ENCODE measurements at regions of chr4 and their contacts with region 1.

Region 1: GRCh38 chr4:145545538-145546174 is 64.0 kb downstream of the SMAD1 start:
- DNase-seq: peak; percentile 95
- H3K4me3 Mint-ChIP-seq: peak overlapping the region; percentile 70
- H3K27ac Mint-ChIP-seq: peak overlapping the region; percentile 87
- H3K4me1 Mint-ChIP-seq: peaks cover 31% of the 10 kb centered on the region
- H3K27me3 Mint-ChIP-seq: no peaks in the 10 kb centered on the region
- CTCF ChIP-seq: no peak

Region 2: GRCh38 chr4:145180298-145181090 is 365.2 kb before region 1 on chr4 and contains the start of gene OTUD4:
- CTCF ChIA-PET with region 1: interaction called, 3 read pairs
- POLR2A ChIA-PET with region 1: interaction called, 10 read pairs
- intact Hi-C with region 1: no loop called
- DNase-seq: peak; percentile 92
- H3K4me3 Mint-ChIP-seq: peak within 1 kb of the TSS; percentile 73
- H3K27ac Mint-ChIP-seq: peak within 1 kb of the TSS; percentile 85
- H3K4me1 Mint-ChIP-seq: peaks cover 9% of the 10 kb centered on the region
- H3K27me3 Mint-ChIP-seq: no peaks in the 10 kb centered on the region
- CTCF ChIP-seq: no peak
- total RNA-seq, gene OTUD4: 66.2 and 68.0 TPM in 2 replicates

Region 3: DNA sequence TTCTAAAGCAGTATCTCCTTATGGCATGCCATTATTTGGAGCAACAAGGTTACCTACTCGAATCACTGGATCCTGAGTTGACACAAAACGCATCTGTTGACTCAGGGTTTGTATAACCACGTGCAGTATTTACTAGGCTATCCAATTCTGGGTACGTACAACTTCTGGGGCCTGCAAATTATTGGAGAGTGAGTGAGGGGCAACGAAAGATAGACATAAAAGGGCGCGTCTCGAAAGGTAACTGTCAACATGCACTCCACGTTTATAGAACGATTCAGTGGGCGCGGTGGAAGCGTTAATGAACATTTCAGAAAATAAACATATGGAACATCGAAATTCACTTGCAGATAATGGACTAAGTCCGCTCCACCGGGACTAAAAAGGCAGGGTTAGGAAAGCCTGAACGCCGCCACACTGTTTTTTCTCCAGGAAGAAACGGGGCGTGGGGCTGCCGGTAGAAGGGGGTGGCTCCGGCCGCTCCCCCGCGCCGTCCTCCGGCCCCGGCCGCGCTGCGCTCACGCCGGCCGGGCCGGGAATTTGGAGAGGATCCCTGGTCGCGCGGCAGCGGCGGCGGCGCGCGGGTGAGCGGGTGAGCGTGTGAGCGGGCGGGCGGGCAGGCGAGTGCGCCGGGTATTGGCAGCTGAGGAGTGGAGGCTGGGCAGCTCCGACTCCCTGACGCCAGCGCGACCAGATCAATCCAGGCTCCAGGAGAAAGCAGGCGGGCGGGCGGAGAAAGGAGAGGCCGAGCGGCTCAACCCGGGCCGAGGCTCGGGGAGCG is 64.3 kb before region 1 on chr4 and contains the start of gene SMAD1:
- CTCF ChIA-PET with region 1: interaction called, 4 read pairs
- POLR2A ChIA-PET with region 1: interaction called, 49 read pairs
- intact Hi-C with region 1: no loop called
- DNase-seq: peak; percentile 83
- H3K4me3 Mint-ChIP-seq: no peak within 1 kb of the TSS
- H3K27ac Mint-ChIP-seq: no peak within 1 kb of the TSS
- H3K4me1 Mint-ChIP-seq: peaks cover 12% of the 10 kb centered on the region
- H3K27me3 Mint-ChIP-seq: no peaks in the 10 kb centered on the region
- CTCF ChIP-seq: no peak
- total RNA-seq, gene SMAD1: 23.7 and 27.9 TPM in 2 replicates

Region 4: DNA sequence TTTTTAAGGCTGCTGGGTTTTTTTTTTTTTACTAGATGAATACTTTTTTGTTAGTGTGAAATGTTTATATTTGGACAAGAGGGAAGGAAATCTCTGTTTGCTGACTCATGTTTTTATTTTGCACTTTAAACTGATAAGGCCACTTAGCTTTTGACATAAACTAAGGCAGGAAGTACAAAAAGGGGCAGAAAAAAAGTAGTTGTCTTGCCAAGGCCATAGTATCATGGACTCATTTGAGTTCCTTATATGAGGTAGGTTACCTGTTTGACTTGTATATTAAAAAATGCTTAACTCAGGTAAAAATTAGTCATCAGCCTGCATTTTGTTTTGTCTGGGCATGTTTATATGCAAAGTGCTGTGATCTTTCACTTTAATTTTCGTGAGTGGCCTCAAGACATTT is 38.0 kb before region 1 on chr4:
- CTCF ChIA-PET with region 1: interaction called, 3 read pairs
- POLR2A ChIA-PET with region 1: interaction called, 10 read pairs
- intact Hi-C with region 1: no loop called
- DNase-seq: peak; percentile 54
- H3K4me3 Mint-ChIP-seq: peak overlapping the region; percentile 50
- H3K27ac Mint-ChIP-seq: peak overlapping the region; percentile 97
- H3K4me1 Mint-ChIP-seq: peaks cover 11% of the 10 kb centered on the region
- H3K27me3 Mint-ChIP-seq: no peaks in the 10 kb centered on the region
- CTCF ChIP-seq: no peak

Region 5: GRCh38 chr4:145557720-145558119 is 12.1 kb after region 1 on chr4:
- CTCF ChIA-PET with region 1: interaction called, 15 read pairs
- POLR2A ChIA-PET with region 1: interaction called, 9 read pairs
- intact Hi-C with region 1: no loop called
- DNase-seq: peak; percentile 72
- H3K4me3 Mint-ChIP-seq: no peak overlapping the region
- H3K27ac Mint-ChIP-seq: peak overlapping the region; percentile 37
- H3K4me1 Mint-ChIP-seq: no peaks in the 10 kb centered on the region
- H3K27me3 Mint-ChIP-seq: no peaks in the 10 kb centered on the region
- CTCF ChIP-seq: peak; percentile 90

Measured in MCF 10A (cell line).